Mammary epithelial cell (primary cell): ENCODE measurements at regions of chr13 and their contacts with region 1.

Region 1: DNA sequence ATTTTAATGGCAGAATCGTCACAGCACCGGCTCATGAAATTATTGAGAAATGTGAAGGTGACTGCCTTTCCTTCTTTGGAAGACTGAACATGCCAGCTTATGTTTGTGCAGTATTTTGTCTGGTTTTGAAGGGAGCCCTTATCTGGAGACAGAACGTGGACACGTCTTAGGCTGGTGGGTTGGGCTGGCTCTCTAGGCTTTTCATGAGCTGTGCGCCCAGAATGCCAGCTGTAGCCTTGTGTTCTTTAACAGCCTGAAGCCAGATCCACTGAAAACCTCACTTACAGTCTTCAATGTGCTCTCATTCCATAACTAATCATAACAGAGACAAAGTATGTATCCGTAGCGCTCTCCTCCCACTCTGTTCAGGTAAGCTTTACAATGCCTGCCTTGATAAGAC is 184.4 kb upstream of the HTR2A start:
- DNase-seq: no peak
- H3K4me3 ChIP-seq: no peak overlapping the region
- H3K27ac ChIP-seq: no peak overlapping the region
- H3K4me1 ChIP-seq: no peaks in the 10 kb centered on the region
- H3K27me3 ChIP-seq: no peaks in the 10 kb centered on the region
- CTCF ChIP-seq: no peak

Region 2: GRCh38 chr13:46995874-46996273 is 85.4 kb before region 1 on chr13:
- CTCF ChIA-PET with region 1: no interaction called
- dilution Hi-C with region 1: loop called (anchors 5 kb)
- in situ Hi-C with region 1: no loop called
- intact Hi-C with region 1: no loop called
- DNase-seq: no peak
- H3K4me3 ChIP-seq: no peak overlapping the region
- H3K27ac ChIP-seq: no peak overlapping the region
- H3K4me1 ChIP-seq: no peaks in the 10 kb centered on the region
- H3K27me3 ChIP-seq: no peaks in the 10 kb centered on the region
- CTCF ChIP-seq: no peak

Region 3: GRCh38 chr13:47126432-47126831 is 45.2 kb after region 1 on chr13:
- CTCF ChIA-PET with region 1: no interaction called
- dilution Hi-C with region 1: loop called (anchors 5 kb)
- in situ Hi-C with region 1: no loop called
- intact Hi-C with region 1: no loop called
- DNase-seq: no peak
- H3K4me3 ChIP-seq: no peak overlapping the region
- H3K27ac ChIP-seq: no peak overlapping the region
- H3K4me1 ChIP-seq: peaks cover 2% of the 10 kb centered on the region
- H3K27me3 ChIP-seq: no peaks in the 10 kb centered on the region
- CTCF ChIP-seq: peak in 1 of 2 donors; percentile 4